Left colon (tissue), 2 donors: ENCODE measurements at regions of chr17 and their contacts with region 1.

Region 1: DNA sequence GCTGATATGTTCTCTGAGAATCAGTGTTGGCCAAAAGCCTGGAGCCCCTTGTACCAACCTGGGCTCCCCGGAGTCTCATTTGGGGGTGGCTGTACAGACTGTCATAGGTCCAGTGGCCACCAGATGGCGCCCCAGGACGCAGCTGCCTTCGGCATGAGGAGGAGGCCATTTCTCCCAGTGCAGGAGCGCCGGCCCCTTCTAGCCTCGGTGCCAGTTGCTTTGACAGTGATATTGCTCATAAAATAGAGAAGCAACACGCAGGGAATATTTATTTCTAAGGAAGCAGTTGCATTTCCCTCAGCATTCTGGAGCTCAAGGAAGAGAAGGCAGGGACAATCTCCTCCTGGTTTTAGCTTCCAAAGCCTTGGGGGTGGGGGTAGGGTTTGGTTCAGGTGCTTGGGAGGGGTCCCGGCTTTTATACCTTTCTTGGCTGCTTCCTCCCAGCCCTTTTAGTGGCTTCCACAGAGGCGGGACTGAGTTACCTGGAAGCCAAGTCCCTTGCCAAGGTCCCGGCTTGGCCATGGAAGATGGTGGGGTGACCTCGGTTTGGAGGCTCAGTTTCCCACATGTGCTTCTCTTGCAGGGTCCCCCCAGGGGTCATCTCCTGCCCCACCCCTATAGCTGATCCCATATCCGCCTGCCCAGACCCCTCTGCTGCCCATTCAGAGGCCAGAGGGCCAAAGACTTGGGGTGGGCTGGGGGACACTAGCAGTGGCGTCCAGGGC is 117.8 kb upstream of the CDC42EP4 start:
- DNase-seq: peak; percentile 77 to 93
- ATAC-seq: peak; percentile 90

Region 2: GRCh38 chr17:73657473-73658116 is 228.0 kb after region 1 on chr17:
- intact Hi-C with region 1: loop called in 1 of 2 experiments (anchors 10 kb)
- DNase-seq: peak; percentile 65 to 81
- ATAC-seq: peak; percentile 81

Region 3: GRCh38 chr17:73710095-73710592 is 280.5 kb after region 1 on chr17:
- intact Hi-C with region 1: loop called in 1 of 2 experiments (anchors 5 kb)
- DNase-seq: peak; percentile 54 to 78
- ATAC-seq: peak; percentile 89

Region 4: DNA sequence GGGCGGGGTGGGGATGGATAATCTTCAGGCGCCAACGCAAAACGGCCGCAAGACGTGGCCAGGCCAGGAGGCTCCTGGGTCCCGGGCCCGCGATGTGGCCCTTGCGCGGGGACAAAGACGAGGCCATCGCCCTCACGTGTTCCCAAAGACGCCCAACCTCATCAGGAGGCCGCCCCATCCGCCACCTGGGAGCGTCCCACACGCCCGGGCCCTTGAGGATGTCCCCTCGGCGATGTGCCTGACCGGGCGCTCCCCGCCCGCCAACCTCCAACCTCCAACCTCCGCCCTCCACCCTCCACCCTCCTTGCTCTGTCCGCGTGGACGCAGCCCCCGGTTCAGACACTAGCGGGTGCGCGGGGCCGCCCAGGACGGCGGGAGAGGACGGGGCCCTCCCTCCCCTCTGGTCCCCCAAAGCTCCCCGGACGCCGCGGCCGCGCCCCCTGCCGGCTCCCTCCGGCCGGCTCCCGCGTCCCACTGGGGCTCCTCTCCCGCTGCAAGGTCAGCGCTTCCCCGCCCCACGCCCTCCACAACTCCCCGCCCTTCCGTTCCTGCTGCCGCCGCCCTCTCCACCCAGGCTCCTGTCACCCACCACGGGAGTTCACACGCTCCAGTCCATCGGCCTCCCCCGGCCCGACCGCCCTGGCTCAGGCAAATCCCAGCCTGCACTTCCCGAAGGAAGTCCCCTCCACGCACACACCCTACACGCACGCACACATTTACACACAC is 523.0 kb after region 1 on chr17:
- intact Hi-C with region 1: no loop called
- DNase-seq: peak; percentile 52 to 66
- ATAC-seq: peak; percentile 51

Region 5: GRCh38 chr17:74176546-74177001 is 747.0 kb after region 1 on chr17:
- intact Hi-C with region 1: loop called (anchors 5 to 10 kb)
- DNase-seq: peak in 1 of 2 donors; percentile 64
- ATAC-seq: peak; percentile 92